Endothelial cell of umbilical vein (primary cell): ENCODE measurements at regions of chr6 and their contacts with region 1.

Region 1: DNA sequence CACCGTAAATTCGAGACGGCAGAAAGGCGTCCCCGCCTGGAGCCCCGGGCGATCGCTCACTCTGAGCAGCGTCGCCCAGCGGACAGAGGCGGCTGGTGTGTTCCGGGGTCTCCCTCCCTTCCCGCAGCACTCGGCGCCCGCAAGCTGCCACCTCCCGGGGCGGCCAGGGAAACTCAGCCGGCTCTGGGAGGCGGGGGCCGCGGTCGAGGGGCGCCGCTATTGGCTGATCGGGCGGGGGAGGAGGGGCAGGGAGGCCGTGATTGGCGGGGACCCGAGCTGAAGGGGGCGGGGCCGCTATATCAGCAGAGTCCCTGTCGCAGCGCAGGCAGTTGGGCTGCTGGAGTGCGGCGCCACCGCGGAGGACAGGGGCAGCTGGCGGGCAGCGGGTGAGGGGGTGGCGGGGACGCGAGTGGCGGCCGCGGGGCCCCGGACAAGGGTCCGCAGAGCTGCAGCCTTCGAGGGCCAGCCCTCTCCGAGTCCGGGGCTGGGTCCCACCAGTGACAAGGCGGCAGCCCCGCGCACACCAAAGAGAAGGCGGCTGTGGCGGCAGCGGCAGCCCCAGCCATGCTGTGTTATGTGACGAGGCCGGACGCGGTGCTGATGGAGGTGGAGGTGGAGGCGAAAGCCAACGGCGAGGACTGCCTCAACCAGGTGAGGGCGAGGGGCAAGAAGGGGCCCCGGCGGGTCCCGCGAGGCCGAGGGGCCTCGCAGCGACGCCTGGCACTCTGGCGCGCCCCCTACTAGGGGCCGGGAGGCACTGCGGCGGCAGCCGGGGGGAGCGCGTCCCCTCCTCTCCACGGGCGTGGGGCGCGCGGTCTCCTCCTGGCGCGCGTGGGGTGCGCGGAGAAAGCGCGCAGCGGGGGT is at the start of gene MYLIP:
- DNase-seq: peak; percentile 95
- H3K4me3 ChIP-seq: peak within 1 kb of the TSS; percentile 68 to 98 (median 71)
- H3K27ac ChIP-seq: peak within 1 kb of the TSS; percentile 71
- H3K4me1 ChIP-seq: peaks cover 24% of the 10 kb centered on the region
- H3K27me3 ChIP-seq: peaks cover 6% of the 10 kb centered on the region in 2 experiments
- CTCF ChIP-seq: peak; percentile 62 to 87
- POLR2A ChIP-seq: peak; percentile 99
- total RNA-seq, gene MYLIP: 15.4 and 19.2 TPM in 2 replicates

Region 2: GRCh38 chr6:15662326-15663129 is 466.5 kb before region 1 on chr6 and contains the start of gene DTNBP1:
- CTCF ChIA-PET with region 1: interaction called, 3 read pairs
- POLR2A ChIA-PET with region 1: interaction called, 3 read pairs
- dilution Hi-C with region 1: no loop called
- intact Hi-C with region 1: loop called (anchors 1 kb)
- DNase-seq: peak; percentile 79
- H3K4me3 ChIP-seq: peak within 1 kb of the TSS; percentile 62 to 78 (median 71)
- H3K27ac ChIP-seq: peak within 1 kb of the TSS; percentile 3
- H3K4me1 ChIP-seq: peaks cover 6% of the 10 kb centered on the region
- H3K27me3 ChIP-seq: peaks cover 3 to 7% of the 10 kb centered on the region in 2 experiments
- CTCF ChIP-seq: no peak
- POLR2A ChIP-seq: peak; percentile 42
- total RNA-seq, gene DTNBP1: 21.8 and 24.3 TPM in 2 replicates

Region 3: DNA sequence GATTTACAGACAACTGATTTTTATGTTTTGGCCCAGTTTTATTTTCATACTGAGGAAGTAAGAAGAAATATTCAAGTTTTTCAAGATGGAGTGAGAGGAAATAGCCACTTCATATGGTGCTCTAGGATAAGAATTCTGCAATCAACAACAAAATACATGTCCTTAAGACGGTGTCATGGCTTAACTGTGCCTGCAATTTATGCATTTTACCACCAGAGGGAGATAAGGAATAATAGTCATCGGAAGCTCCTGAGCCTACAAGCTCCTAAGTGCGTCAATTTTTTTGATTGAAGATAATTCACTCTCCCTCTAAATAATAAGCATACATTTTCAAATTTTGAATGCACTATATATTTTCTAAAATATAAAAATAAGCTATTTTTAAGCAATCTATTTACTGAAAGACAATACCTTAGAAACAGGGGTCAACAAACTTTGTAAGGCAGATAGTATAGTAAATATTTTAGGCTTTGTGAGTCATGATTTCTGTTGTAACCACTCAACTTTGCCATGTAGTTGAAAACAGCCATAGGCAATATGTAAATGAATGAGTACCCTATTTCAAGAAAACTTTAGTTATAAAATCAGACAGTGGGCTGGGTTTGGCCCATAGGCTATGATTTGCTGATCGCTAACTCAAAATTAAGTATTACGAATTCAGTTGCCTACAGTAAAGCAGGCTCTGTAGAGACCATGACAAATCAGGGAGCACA is 235.3 kb before region 1 on chr6:
- CTCF ChIA-PET with region 1: interaction called, 16 read pairs
- POLR2A ChIA-PET with region 1: interaction called, 9 read pairs
- dilution Hi-C with region 1: no loop called
- intact Hi-C with region 1: loop called (anchors 1 kb)
- DNase-seq: peak; percentile 50
- H3K4me3 ChIP-seq: no peak overlapping the region
- H3K27ac ChIP-seq: no peak overlapping the region
- H3K4me1 ChIP-seq: peaks cover 18% of the 10 kb centered on the region
- H3K27me3 ChIP-seq: no peaks in the 10 kb centered on the region
- CTCF ChIP-seq: peak; percentile 34 to 42
- POLR2A ChIP-seq: no peak

Region 4: DNA sequence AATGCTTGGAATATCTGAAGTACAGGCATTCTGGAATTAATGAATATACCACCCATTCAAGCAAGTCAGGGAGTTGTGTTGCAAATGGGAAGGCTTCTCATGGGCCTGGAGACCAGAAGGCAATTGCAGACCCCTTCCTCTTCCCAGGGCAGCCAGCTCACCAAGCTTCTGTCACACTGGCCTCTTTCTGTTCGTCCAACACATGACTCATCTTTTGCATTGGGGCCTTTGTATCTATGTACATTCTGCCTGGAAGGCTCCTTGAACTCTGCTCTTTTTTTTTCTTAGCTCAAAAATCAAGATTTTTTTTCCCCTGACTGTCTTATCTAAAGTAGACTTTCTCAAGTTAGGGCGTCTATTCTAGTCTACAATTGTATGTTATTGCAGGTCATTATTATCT is 133.0 kb before region 1 on chr6:
- CTCF ChIA-PET with region 1: interaction called, 4 read pairs
- POLR2A ChIA-PET with region 1: interaction called, 5 read pairs
- dilution Hi-C with region 1: no loop called
- intact Hi-C with region 1: loop called (anchors 2 kb)
- DNase-seq: peak; percentile 48
- H3K4me3 ChIP-seq: no peak overlapping the region
- H3K27ac ChIP-seq: no peak overlapping the region
- H3K4me1 ChIP-seq: peaks cover 33% of the 10 kb centered on the region
- H3K27me3 ChIP-seq: no peaks in the 10 kb centered on the region
- CTCF ChIP-seq: no peak
- POLR2A ChIP-seq: no peak

Region 5: GRCh38 chr6:16168858-16169257 is 39.9 kb after region 1 on chr6:
- CTCF ChIA-PET with region 1: interaction called, 12 read pairs
- POLR2A ChIA-PET with region 1: no interaction called
- dilution Hi-C with region 1: no loop called
- intact Hi-C with region 1: loop called (anchors 2 kb)
- DNase-seq: peak; percentile 79
- H3K4me3 ChIP-seq: no peak overlapping the region
- H3K27ac ChIP-seq: no peak overlapping the region
- H3K4me1 ChIP-seq: no peaks in the 10 kb centered on the region
- H3K27me3 ChIP-seq: peaks cover 3% of the 10 kb centered on the region in 2 experiments
- CTCF ChIP-seq: peak; percentile 27 to 67
- POLR2A ChIP-seq: no peak

Region 6: GRCh38 chr6:16216501-16217155 is 87.6 kb after region 1 on chr6:
- CTCF ChIA-PET with region 1: no interaction called
- POLR2A ChIA-PET with region 1: no interaction called
- dilution Hi-C with region 1: no loop called
- intact Hi-C with region 1: loop called (anchors 2 kb)
- DNase-seq: peak; percentile 41
- H3K4me3 ChIP-seq: no peak overlapping the region
- H3K27ac ChIP-seq: peak overlapping the region; percentile 99
- H3K4me1 ChIP-seq: peaks cover 28% of the 10 kb centered on the region
- H3K27me3 ChIP-seq: no peaks in the 10 kb centered on the region
- CTCF ChIP-seq: no peak
- POLR2A ChIP-seq: no peak